ENCODE measurements at regions of chr1 and their contacts with region 1.

Region 1: GRCh38 chr1:6624710-6625583 is at the start of gene THAP3:
- DNase-seq: peak; percentile 79
- H3K4me3 Mint-ChIP-seq: peak within 1 kb of the TSS; percentile 96
- H3K27ac Mint-ChIP-seq: peak within 1 kb of the TSS; percentile 86
- H3K4me1 Mint-ChIP-seq: peaks cover 24% of the 10 kb centered on the region
- H3K27me3 Mint-ChIP-seq: no peaks in the 10 kb centered on the region
- total RNA-seq, gene THAP3: 22.2 and 23.5 TPM in 2 replicates

Region 2: DNA sequence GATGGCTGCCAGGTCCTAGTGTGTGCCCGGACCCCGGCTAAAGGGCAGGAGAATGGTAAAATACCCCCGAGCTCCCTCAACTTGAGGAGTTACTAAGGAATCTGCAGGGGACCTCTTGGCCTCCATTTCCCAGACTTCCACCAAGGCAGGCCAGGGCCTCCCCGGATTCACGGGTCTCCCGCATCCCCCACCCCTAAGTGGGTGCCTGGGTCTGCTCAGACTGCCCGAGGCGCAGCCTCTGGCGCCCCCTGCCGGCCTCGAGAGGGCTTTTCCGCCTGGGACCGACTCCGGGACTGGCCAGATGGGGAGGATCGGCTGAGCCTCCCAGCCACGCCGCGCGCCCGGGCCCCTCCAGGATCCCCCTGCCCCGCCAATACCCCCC is 135.2 kb before region 1 on chr1:
- intact Hi-C with region 1: loop called (anchors 5 kb)
- DNase-seq: peak; percentile 79
- H3K4me3 Mint-ChIP-seq: peak overlapping the region; percentile 85
- H3K27ac Mint-ChIP-seq: peak overlapping the region; percentile 48
- H3K4me1 Mint-ChIP-seq: peaks cover 16% of the 10 kb centered on the region
- H3K27me3 Mint-ChIP-seq: peaks cover 25% of the 10 kb centered on the region

Region 3: DNA sequence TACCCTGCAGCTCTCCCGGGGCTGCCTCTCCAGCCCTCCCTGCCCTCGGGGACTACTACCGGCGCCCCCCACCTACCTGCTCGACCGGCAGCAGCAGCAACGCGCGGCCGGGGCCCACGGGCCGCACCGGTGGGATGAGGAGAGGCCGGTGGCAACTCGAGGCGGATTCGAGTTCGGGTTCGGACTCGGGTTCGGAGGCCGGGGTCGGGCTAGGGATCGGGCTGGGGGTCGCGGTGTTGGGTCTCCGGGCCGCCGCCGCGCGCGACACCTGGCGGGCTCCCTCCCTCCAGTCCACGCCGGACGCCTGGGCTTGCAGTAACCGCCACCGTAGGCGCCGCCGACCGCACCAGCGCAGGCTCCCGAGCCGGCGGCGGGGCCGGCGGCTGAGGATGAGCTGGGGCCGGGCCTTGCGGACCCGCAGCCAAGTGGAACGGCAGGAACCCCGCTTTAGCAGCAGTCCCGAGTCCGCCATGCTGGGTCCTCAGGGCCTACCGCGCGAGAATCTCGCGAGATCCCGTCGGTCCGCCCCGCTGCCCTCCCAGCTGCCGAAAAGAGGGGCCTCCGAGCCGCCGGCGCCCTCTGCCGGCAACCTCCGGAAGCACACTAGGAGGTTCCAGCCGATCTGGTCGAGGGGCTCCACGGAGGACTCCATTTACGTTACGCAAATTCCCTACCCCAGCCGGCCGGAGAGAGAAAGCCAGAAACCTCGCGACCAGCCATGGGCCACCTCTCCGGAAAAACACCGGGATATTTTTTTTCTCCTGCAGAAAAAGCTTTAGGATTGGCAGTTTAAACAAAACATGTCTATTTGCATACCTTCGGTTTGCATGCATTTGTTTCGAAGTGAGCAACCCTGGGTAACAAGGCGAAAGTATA is 70.7 kb before region 1 on chr1 and contains the start of gene NOL9:
- intact Hi-C with region 1: loop called (anchors 1 kb)
- DNase-seq: peak; percentile 93
- H3K4me3 Mint-ChIP-seq: peak within 1 kb of the TSS; percentile 87
- H3K27ac Mint-ChIP-seq: peak within 1 kb of the TSS; percentile 81
- H3K4me1 Mint-ChIP-seq: peaks cover 7% of the 10 kb centered on the region
- H3K27me3 Mint-ChIP-seq: no peaks in the 10 kb centered on the region
- total RNA-seq, gene NOL9: 50.4 and 58.9 TPM in 2 replicates

Region 4: DNA sequence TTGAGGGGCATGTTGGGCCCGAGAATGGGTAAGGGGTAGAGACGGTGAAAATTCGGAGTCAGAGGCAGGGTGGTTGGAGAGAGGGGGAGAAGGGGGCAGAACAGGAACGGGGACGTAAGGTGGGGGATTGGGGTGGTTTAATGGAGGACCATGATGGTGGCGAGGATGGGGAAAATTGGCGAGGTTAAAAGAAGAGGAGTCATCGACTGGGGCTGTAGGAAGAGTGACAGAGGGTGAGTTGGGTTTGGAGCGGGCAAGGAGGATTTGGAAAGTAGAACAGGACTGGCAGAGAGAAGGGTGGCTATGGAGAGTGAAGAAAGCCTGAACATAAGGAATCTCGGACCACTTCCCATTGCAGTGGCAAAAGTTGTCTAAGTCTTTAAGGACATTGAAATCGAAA is 55.9 kb before region 1 on chr1:
- intact Hi-C with region 1: no loop called
- DNase-seq: no peak
- H3K4me3 Mint-ChIP-seq: no peak overlapping the region
- H3K27ac Mint-ChIP-seq: no peak overlapping the region
- H3K4me1 Mint-ChIP-seq: peaks cover 6% of the 10 kb centered on the region
- H3K27me3 Mint-ChIP-seq: peaks cover 5% of the 10 kb centered on the region

Region 5: DNA sequence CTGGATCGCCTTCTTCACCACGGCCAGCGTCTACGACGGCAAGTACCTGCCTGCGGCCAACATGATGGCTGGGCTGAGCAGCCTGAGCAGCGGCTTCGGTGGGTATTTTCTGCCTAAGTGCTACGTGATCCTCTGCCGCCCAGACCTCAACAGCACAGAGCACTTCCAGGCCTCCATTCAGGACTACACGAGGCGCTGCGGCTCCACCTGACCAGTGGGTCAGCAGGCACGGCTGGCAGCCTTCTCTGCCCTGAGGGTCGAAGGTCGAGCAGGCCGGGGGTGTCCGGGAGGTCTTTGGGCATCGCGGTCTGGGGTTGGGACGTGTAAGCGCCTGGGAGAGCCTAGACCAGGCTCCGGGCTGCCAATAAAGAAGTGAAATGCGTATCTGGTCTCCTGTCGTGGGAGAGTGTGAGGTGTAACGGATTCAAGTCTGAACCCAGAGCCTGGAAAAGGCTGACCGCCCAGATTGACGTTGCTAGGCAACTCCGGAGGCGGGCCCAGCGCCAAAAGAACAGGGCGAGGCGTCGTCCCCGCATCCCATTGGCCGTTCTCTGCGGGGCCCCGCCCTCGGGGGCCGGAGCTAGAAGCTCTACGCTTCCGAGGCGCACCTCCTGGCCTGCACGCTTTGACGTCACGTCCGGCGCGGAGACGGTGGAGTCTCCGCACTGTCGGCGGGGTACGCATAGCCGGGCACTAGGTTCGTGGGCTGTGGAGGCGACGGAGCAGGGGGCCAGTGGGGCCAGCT is 45.4 kb before region 1 on chr1 and contains the start of gene ZBTB48:
- intact Hi-C with region 1: loop called (anchors 1 kb)
- DNase-seq: peak; percentile 97
- H3K4me3 Mint-ChIP-seq: peak within 1 kb of the TSS; percentile 95
- H3K27ac Mint-ChIP-seq: peak within 1 kb of the TSS; percentile 98
- H3K4me1 Mint-ChIP-seq: peaks cover 36% of the 10 kb centered on the region
- H3K27me3 Mint-ChIP-seq: no peaks in the 10 kb centered on the region
- total RNA-seq, gene ZBTB48: 34.5 and 35.7 TPM in 2 replicates

Region 6: GRCh38 chr1:6613361-6614018 is 11.5 kb before region 1 on chr1 and contains the start of gene PHF13:
- intact Hi-C with region 1: loop called (anchors 1 kb)
- DNase-seq: peak; percentile 99
- H3K4me3 Mint-ChIP-seq: peak within 1 kb of the TSS; percentile 85
- H3K27ac Mint-ChIP-seq: peak within 1 kb of the TSS; percentile 82
- H3K4me1 Mint-ChIP-seq: peaks cover 24% of the 10 kb centered on the region
- H3K27me3 Mint-ChIP-seq: peaks cover 4% of the 10 kb centered on the region
- total RNA-seq, gene PHF13: 18.8 and 19.5 TPM in 2 replicates

Region 7: GRCh38 chr1:6638226-6638625 is 13.3 kb after region 1 on chr1:
- intact Hi-C with region 1: no loop called
- DNase-seq: no peak
- H3K4me3 Mint-ChIP-seq: no peak overlapping the region
- H3K27ac Mint-ChIP-seq: no peak overlapping the region
- H3K4me1 Mint-ChIP-seq: no peaks in the 10 kb centered on the region
- H3K27me3 Mint-ChIP-seq: no peaks in the 10 kb centered on the region

Region 8: DNA sequence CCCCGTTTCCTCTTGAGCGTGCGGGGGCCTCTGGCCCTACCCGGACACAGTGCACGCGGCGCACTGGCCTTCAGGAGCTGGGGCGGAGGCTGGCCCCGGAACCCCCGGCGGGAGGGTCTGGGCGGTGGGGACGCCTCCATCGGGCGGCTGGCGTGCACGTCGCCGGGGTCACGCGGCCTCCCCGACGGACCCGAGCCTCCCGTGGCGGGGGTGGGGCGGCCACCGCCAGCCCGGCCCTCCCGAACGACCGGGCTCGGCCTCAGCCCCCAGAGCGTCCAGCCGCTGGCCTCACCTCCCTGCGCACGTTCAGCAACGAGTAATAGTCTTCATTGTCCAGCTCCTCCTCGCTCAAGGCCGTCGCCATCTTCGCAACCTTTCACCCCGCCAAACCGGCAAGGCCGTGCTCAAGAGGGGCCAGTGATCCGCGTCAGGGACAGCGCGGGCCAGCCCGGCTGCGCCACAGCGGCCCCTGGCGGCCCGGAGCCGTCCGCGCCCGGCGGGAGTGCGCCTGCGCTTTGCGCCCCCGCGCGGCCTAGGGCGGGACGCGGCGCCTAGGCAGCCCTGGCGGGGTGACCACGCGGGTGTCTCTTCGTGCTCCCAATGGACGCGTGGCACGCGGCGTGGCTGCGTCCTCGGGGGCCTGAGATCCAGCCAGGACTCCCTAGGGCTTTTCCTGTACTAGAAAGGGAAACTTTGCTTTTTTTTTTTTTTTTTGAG is 76.6 kb after region 1 on chr1 and contains the start of gene DNAJC11:
- intact Hi-C with region 1: loop called (anchors 1 kb)
- DNase-seq: peak; percentile 92
- H3K4me3 Mint-ChIP-seq: peak within 1 kb of the TSS; percentile 92
- H3K27ac Mint-ChIP-seq: peak within 1 kb of the TSS; percentile 96
- H3K4me1 Mint-ChIP-seq: peaks cover 27% of the 10 kb centered on the region
- H3K27me3 Mint-ChIP-seq: no peaks in the 10 kb centered on the region
- total RNA-seq, gene DNAJC11: 81.4 and 84.4 TPM in 2 replicates

Region 9: GRCh38 chr1:7379445-7379971 is 754.6 kb after region 1 on chr1:
- intact Hi-C with region 1: no loop called
- DNase-seq: no peak
- H3K4me3 Mint-ChIP-seq: no peak overlapping the region
- H3K27ac Mint-ChIP-seq: no peak overlapping the region
- H3K4me1 Mint-ChIP-seq: no peaks in the 10 kb centered on the region
- H3K27me3 Mint-ChIP-seq: peaks cover 8% of the 10 kb centered on the region